PC-9 (cell line): ENCODE measurements at regions of chr5 and their contacts with region 1.

Region 1: GRCh38 chr5:124748687-124749594 is 2.5 kb upstream of the ZNF608 start:
- DNase-seq: peak; percentile 55 to 74
- H3K4me3 ChIP-seq: peak overlapping the region; percentile 48; the same call in 1 of the 2 replicates
- H3K27ac ChIP-seq: peak overlapping the region; percentile 49
- H3K4me1 ChIP-seq: no peaks in the 10 kb centered on the region
- H3K27me3 ChIP-seq: no peaks in the 10 kb centered on the region
- CTCF ChIP-seq: no peak

Region 2: GRCh38 chr5:124536333-124536732 is 212.6 kb before region 1 on chr5:
- CTCF ChIA-PET with region 1: no interaction called
- POLR2A ChIA-PET with region 1: interaction called, 16 read pairs
- intact Hi-C with region 1: no loop called
- DNase-seq: no peak
- H3K4me3 ChIP-seq: no peak overlapping the region
- H3K27ac ChIP-seq: no peak overlapping the region
- H3K4me1 ChIP-seq: no peaks in the 10 kb centered on the region
- H3K27me3 ChIP-seq: no peaks in the 10 kb centered on the region
- CTCF ChIP-seq: no peak

Region 3: GRCh38 chr5:125026896-125027732 is 278.2 kb after region 1 on chr5:
- CTCF ChIA-PET with region 1: no interaction called
- POLR2A ChIA-PET with region 1: no interaction called
- intact Hi-C with region 1: no loop called
- DNase-seq: peak in 1 of 2 experiments; percentile 97
- H3K4me3 ChIP-seq: no peak overlapping the region
- H3K27ac ChIP-seq: peak overlapping the region; percentile 77
- H3K4me1 ChIP-seq: peaks cover 21% of the 10 kb centered on the region
- H3K27me3 ChIP-seq: no peaks in the 10 kb centered on the region
- CTCF ChIP-seq: no peak